Panc1 (cell line): ENCODE measurements at regions of chr20 and their contacts with region 1.

Region 1: DNA sequence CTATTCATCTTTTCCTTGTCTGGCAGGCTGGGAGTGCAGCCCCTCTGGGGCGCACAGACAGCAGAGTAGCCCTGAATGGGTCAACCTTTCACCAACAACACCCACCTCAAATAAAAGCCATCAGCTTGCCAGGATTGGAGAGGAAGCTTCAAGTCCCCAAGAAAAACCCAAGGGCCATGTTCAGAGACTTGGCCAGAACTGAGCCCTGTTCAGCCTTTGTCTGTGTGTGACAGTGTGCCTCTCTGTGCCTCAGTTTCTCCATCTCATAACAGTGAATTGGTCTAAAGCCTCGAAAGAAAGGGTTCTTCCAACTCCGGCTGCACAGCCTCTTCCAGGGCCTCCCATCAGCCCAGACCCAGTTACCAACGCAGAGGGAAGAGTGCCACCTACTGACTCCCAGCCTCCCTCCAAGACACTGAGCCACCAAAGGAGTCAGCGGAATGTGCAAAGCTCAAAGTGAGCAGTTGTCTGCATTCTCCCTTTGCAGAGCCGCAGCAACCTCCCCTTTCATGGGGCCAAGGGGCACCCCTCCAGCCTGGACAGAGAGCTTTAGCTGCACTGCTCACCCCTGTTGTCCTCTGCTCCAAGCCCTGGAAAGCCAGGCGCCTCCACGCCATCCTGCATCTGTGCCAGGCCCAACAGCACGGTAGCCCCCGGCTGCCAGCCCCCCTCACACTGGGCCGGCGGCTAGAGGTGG is 82.7 kb upstream of the TOP1 start:
- DNase-seq: no peak
- ATAC-seq: peak; percentile 97
- H3K4me3 ChIP-seq: no peak overlapping the region
- H3K27ac ChIP-seq: no peak overlapping the region
- H3K4me1 ChIP-seq: no peaks in the 10 kb centered on the region
- H3K27me3 ChIP-seq: peaks cover 12% of the 10 kb centered on the region
- CTCF ChIP-seq: peak; percentile 78

Region 2: DNA sequence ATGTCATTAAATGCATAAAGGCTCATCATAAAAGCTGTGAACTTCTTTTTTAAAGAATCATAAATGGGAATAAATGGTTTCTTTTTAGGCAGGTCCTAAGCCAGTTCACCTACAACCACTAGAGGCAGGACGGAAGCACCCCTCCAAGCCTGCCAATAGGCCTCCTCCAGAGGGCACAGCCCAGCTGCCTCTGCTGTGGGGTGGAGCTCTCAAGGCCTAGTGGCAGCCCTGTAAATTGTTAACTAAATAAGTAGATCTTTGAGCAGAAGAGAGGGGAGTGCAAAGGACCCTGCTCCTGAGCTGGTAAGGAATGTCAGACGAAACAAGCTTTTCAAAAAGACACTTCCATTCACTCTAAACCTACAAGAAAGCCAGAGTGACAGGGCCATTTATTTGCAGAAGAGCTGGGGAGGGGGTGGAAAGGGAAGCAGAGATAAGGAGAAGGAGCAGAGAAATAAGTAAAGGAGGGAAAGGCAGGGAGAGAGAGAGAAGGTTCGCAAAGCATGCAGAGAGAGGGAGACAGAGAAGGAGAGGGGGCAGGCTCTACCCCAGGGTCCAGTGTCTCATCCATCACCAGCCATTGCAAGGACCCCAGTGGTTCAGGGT is 238.8 kb before region 1 on chr20:
- CTCF ChIA-PET with region 1: no interaction called
- POLR2A ChIA-PET with region 1: no interaction called
- in situ Hi-C with region 1: no loop called
- intact Hi-C with region 1: loop called (anchors 10 kb)
- DNase-seq: no peak
- ATAC-seq: no peak
- H3K4me3 ChIP-seq: no peak overlapping the region
- H3K27ac ChIP-seq: no peak overlapping the region
- H3K4me1 ChIP-seq: no peaks in the 10 kb centered on the region
- H3K27me3 ChIP-seq: peaks cover 26% of the 10 kb centered on the region
- CTCF ChIP-seq: no peak

Region 3: DNA sequence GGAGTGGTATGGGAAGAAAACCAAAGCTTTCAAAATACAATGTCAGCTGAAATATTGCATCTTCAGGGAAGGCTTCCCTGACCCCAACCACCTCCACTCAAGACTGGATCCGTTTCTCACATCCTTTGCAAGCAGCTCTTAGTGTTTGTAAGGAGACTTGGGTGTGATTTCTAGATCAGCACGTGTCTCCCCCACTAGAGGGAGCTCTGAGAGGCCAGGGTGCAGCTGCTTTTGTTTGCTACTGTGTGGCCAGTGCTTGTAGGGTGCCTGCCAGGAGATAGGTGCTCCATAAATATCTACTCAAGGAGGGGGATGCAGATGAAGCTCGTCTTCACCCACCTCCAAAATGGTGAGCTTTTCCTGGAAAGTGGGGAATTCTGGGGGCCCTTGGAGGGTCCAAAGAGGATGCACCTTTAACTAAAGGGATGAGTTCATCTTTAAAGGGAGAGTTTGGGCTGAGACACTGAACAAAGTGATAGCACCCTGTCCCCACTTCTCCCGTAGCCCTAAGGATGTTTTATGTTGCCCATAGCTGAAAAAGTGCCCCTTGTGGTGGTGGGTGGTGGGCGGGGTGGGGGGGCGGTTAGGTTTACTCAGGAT is 204.3 kb before region 1 on chr20:
- CTCF ChIA-PET with region 1: interaction called, 5 read pairs
- POLR2A ChIA-PET with region 1: no interaction called
- in situ Hi-C with region 1: no loop called
- intact Hi-C with region 1: loop called (anchors 5 kb)
- DNase-seq: peak; percentile 25
- ATAC-seq: peak; percentile 64; the same call in 1 of the 2 replicates
- H3K4me3 ChIP-seq: no peak overlapping the region
- H3K27ac ChIP-seq: no peak overlapping the region
- H3K4me1 ChIP-seq: no peaks in the 10 kb centered on the region
- H3K27me3 ChIP-seq: no peaks in the 10 kb centered on the region; the same call in 1 of the 2 replicates
- CTCF ChIP-seq: peak; percentile 82

Region 4: DNA sequence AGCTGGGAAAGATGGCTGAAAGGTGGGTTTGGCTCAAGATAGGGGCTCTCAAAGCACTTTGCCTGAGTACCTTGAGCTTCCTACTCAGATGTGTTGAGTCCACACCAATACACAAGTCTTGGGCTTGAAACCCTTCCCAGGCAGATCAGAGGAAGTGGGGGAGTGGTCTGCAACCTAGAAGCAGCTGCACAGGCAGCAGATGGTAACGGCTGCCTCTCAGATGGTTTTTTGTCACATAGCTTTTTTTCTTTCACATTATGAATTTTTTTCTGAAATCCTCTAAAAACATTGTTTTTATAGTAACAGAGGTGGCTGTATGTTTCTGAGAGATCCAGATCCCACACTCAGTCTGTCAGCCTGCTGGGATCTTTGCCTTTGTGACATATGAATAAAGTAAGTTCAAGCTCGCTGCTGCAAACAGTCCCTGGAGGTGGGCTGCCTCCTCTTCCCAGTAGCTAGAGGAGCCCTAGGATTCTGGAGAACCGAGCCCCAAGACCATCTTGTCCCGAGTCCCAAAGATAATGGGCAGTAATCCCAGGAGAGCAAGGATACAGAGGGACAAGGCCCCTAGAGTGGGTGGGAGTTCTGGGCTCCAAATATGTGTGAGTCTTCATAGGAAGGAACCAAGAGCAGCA is 14.4 kb before region 1 on chr20:
- CTCF ChIA-PET with region 1: no interaction called
- POLR2A ChIA-PET with region 1: no interaction called
- in situ Hi-C with region 1: no loop called
- intact Hi-C with region 1: no loop called
- DNase-seq: no peak
- ATAC-seq: no peak
- H3K4me3 ChIP-seq: no peak overlapping the region
- H3K27ac ChIP-seq: no peak overlapping the region
- H3K4me1 ChIP-seq: no peaks in the 10 kb centered on the region
- H3K27me3 ChIP-seq: peaks cover 2% of the 10 kb centered on the region
- CTCF ChIP-seq: no peak